MCF 10A (cell line): ENCODE measurements at regions of chr16 and their contacts with region 1.

Region 1: DNA sequence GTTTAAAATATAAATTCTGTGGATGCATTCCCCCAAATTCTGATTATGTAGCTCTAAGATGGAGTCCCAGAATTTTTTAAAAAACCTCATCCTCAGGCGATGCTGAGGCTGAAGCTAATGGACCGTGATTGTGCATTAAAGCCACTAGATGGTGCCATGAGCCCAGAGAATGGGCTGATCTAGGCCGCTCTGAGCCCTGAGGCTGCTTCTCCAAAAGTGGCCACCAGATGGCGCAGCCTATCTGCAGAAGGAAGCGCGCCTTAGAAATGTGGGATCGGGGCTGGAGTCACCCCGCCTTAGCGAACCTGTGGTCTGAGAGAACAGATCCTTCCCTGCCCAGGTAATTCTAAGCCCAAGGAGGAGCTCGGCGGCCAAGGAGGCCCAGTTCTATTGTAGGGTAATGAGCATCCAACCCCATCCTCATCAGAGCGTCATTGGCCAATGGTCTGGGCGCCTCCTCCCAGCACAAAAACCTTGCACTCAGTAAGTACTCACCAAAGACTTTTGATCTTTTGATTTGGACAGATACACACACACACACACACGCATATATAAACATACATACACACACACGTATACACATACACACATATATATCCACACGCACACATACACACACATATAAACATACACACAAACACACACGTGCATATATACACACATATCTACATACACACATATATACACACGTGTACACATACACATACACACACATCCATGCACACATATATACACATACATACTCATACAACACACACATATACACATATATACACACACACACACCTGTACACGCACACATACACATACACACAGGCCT is 13.7 kb upstream of the MMP2 start:
- DNase-seq: peak; percentile 80
- H3K4me3 Mint-ChIP-seq: no peak overlapping the region
- H3K27ac Mint-ChIP-seq: no peak overlapping the region
- H3K4me1 Mint-ChIP-seq: peaks cover 3% of the 10 kb centered on the region
- H3K27me3 Mint-ChIP-seq: no peaks in the 10 kb centered on the region
- CTCF ChIP-seq: peak; percentile 100

Region 2: GRCh38 chr16:53549970-53550690 is 1915.2 kb before region 1 on chr16:
- CTCF ChIA-PET with region 1: interaction called, 4 read pairs
- POLR2A ChIA-PET with region 1: no interaction called
- intact Hi-C with region 1: loop called (anchors 5 kb)
- DNase-seq: peak; percentile 81
- H3K4me3 Mint-ChIP-seq: no peak overlapping the region
- H3K27ac Mint-ChIP-seq: no peak overlapping the region
- H3K4me1 Mint-ChIP-seq: peaks cover 6% of the 10 kb centered on the region
- H3K27me3 Mint-ChIP-seq: no peaks in the 10 kb centered on the region
- CTCF ChIP-seq: peak; percentile 69

Region 3: GRCh38 chr16:55444754-55445485 is 20.4 kb before region 1 on chr16:
- CTCF ChIA-PET with region 1: interaction called, 35 read pairs
- POLR2A ChIA-PET with region 1: no interaction called
- intact Hi-C with region 1: no loop called
- DNase-seq: no peak
- H3K4me3 Mint-ChIP-seq: no peak overlapping the region
- H3K27ac Mint-ChIP-seq: no peak overlapping the region
- H3K4me1 Mint-ChIP-seq: no peaks in the 10 kb centered on the region
- H3K27me3 Mint-ChIP-seq: no peaks in the 10 kb centered on the region
- CTCF ChIP-seq: no peak

Region 4: DNA sequence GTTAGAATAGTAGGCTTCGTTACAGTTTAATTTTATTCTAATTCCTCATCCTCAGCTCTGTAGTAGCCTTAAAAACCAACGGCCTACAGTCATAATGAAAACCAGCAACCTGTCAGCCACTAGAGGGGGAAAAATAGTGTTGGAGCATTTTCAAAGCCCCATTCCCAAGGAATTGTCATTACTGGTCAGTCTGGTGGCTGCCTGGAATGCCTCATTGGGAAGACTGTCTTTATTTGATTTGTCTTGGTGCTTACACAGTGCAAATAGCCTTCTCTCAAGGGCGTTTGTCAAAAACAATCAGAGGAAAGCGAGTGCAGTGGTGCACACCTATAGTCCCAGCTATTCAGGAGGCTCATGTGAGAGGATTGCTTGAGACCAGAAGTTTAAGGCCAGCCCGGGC is 48.3 kb after region 1 on chr16:
- CTCF ChIA-PET with region 1: interaction called, 10 read pairs
- POLR2A ChIA-PET with region 1: no interaction called
- intact Hi-C with region 1: no loop called
- DNase-seq: no peak
- H3K4me3 Mint-ChIP-seq: no peak overlapping the region
- H3K27ac Mint-ChIP-seq: no peak overlapping the region
- H3K4me1 Mint-ChIP-seq: peaks cover 14% of the 10 kb centered on the region
- H3K27me3 Mint-ChIP-seq: no peaks in the 10 kb centered on the region
- CTCF ChIP-seq: no peak

Region 5: DNA sequence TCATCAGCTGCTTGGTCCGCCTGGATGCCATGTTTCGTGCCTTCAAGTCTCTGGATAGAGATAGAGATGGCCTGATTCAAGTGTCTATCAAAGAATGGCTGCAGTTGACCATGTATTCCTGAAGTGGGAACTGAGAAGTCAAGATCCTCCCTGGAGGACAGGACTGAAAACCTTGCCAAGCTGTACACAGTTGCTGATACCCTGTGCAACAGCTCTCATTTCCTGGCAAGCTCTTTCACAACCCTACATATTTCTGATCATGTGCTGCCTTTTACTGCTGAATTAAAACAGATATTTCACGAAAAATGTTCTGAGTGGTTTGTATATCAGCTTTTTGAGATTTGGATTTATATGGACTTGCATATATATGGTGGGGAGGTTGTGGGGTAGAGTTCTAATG is 102.1 kb after region 1 on chr16:
- CTCF ChIA-PET with region 1: interaction called, 31 read pairs
- POLR2A ChIA-PET with region 1: no interaction called
- intact Hi-C with region 1: no loop called
- DNase-seq: peak; percentile 73
- H3K4me3 Mint-ChIP-seq: peak overlapping the region; percentile 59
- H3K27ac Mint-ChIP-seq: peak overlapping the region; percentile 97
- H3K4me1 Mint-ChIP-seq: peaks cover 50% of the 10 kb centered on the region
- H3K27me3 Mint-ChIP-seq: no peaks in the 10 kb centered on the region
- CTCF ChIP-seq: no peak

Region 6: GRCh38 chr16:55711959-55712876 is 246.9 kb after region 1 on chr16:
- CTCF ChIA-PET with region 1: interaction called, 619 read pairs
- POLR2A ChIA-PET with region 1: no interaction called
- intact Hi-C with region 1: no loop called
- DNase-seq: peak; percentile 74
- H3K4me3 Mint-ChIP-seq: no peak overlapping the region
- H3K27ac Mint-ChIP-seq: no peak overlapping the region
- H3K4me1 Mint-ChIP-seq: no peaks in the 10 kb centered on the region
- H3K27me3 Mint-ChIP-seq: no peaks in the 10 kb centered on the region
- CTCF ChIP-seq: peak; percentile 63

Region 7: DNA sequence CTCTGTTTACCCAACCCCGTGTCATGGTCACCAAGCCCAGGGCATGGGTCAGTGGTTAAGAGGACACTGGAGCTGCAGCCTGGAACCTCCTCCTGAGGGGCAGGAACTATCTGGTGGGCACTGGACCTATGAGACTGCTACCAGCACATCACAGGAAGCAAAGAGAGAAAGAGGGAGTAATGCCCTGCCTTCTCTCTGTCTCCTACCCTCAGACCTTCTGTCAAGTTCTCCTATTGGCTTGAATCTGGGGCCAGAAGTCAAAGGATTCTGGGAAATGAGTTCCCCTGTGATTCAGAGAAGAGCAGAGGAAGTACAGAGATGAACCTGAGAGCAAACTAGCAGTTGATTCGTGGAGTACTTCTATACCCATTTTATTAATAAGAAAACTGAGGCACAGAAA is 603.0 kb after region 1 on chr16:
- CTCF ChIA-PET with region 1: no interaction called
- POLR2A ChIA-PET with region 1: no interaction called
- intact Hi-C with region 1: no loop called
- DNase-seq: no peak
- H3K4me3 Mint-ChIP-seq: no peak overlapping the region
- H3K27ac Mint-ChIP-seq: no peak overlapping the region
- H3K4me1 Mint-ChIP-seq: no peaks in the 10 kb centered on the region
- H3K27me3 Mint-ChIP-seq: peaks cover 21% of the 10 kb centered on the region
- CTCF ChIP-seq: no peak